GM13976 (cell line): ENCODE measurements at regions of chr9 and their contacts with region 1.

Region 1: GRCh38 chr9:119556129-119556875 is 187.1 kb upstream of the BRINP1 start:
- DNase-seq: peak; percentile 76
- CTCF ChIP-seq: peak; percentile 92

Region 2: GRCh38 chr9:119412399-119412798 is 143.9 kb before region 1 on chr9:
- in situ Hi-C with region 1: no loop called
- DNase-seq: no peak
- CTCF ChIP-seq: no peak

Region 3: DNA sequence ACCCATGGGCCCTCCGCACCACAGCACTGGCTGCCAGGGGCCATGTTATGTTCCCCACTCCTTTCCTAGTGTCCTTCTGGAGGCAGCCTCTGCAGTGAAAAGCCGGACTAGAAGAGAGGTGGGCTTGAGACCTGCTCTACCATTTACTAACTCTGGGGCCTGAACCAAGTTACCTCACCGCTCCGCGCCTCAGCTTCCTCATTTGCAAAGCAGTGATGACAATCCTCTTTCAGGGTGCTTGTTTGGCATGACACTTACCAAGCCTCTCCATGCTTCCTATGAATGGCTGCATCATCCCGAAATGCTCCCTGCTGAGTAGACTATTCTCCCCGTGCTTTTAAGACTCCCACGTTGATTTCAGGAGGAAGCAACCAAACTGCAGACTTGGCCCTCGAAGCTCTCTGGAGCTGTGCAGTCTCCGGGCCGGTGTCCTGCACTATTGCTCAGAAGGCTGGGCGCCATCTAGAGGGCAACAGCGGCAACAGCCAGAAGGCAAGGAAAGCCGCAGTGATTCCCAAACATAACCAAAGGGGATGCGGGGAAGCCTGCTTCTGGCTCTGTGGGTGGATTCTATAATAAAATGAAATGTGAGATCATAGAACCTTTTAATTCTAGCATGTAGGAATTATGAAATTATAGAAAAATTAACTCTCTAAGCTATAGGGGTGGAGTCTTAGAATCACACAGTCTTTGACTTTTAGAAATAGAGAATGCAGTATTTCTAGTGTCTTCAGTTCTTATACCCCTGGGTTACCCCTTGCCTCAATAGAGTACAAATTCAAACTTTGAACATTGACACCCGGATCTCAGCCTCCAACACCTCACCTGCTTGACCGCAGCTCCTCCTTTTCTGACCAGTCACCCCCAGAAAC is 412.8 kb after region 1 on chr9:
- in situ Hi-C with region 1: loop called (anchors 25 kb)
- DNase-seq: peak; percentile 76
- CTCF ChIP-seq: peak; percentile 95